CD8-positive, alpha-beta T cell (primary cell): ENCODE measurements at regions of chr5 and their contacts with region 1.

Region 1: DNA sequence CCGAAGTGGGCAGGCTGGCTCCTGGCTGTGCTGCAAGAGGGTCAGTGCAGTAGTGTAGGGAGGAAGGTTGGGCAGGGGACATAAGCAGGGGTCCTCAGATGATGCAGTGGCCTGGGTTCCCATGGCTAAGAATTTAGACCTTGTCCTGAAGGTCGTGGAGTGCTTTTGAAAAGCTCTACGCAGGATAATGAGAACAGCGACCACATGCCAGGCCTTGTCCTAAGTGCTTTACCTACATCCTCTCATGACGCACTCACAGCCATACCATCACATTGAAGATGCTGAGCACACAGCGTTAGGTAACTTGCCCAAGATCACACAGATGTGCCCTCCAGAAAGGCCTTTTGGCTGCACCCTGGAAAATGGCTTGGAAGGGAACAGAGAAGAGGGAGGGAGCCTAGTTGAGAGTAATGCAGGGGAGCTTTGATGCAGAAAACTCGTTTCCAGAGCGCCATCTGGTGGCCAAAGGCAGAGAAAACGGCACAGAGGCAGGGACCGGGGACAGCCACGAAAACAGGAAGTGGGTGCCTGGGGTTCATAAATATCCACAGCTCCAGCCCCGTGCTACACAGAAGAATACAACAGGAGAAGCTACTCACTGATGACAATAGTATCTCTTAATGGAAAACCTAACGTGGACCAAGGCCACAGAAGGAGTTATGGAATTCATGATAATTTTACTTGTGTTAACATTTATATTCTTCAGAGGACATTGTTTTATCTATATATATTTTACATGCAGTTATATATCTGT is 2.6 kb upstream of the PCDH12 start:
- DNase-seq: peak; percentile 81 to 97 (median 91)
- ATAC-seq: peak; percentile 99
- H3K4me3 ChIP-seq: no peak overlapping the region
- H3K4me3 Mint-ChIP-seq: peak overlapping the region; percentile 59
- H3K27ac ChIP-seq: peak overlapping the region in 1 of 2 experiments; percentile 66
- H3K27ac Mint-ChIP-seq: peak overlapping the region; percentile 95
- H3K4me1 ChIP-seq: peaks cover 42% of the 10 kb centered on the region
- H3K4me1 Mint-ChIP-seq: peaks cover 43% of the 10 kb centered on the region
- H3K27me3 ChIP-seq: no peaks in the 10 kb centered on the region
- H3K27me3 Mint-ChIP-seq: no peaks in the 10 kb centered on the region
- CTCF ChIP-seq: peak; percentile 83

Region 2: GRCh38 chr5:141664732-141665461 is 295.7 kb before region 1 on chr5:
- CTCF ChIA-PET with region 1: interaction called, 56 read pairs
- POLR2A ChIA-PET with region 1: interaction called, 7 read pairs
- intact Hi-C with region 1: loop called (anchors 1 kb)
- DNase-seq: peak; percentile 49 to 88 (median 76)
- ATAC-seq: peak; percentile 83
- H3K4me3 ChIP-seq: no peak overlapping the region
- H3K4me3 Mint-ChIP-seq: no peak overlapping the region
- H3K27ac ChIP-seq: no peak overlapping the region
- H3K27ac Mint-ChIP-seq: no peak overlapping the region
- H3K4me1 ChIP-seq: no peaks in the 10 kb centered on the region
- H3K4me1 Mint-ChIP-seq: peaks cover 3% of the 10 kb centered on the region
- H3K27me3 ChIP-seq: no peaks in the 10 kb centered on the region
- H3K27me3 Mint-ChIP-seq: no peaks in the 10 kb centered on the region
- CTCF ChIP-seq: peak; percentile 83

Region 3: GRCh38 chr5:141681695-141682641 is 278.7 kb before region 1 on chr5 and contains the start of gene ARAP3:
- CTCF ChIA-PET with region 1: interaction called, 22 read pairs
- POLR2A ChIA-PET with region 1: no interaction called
- intact Hi-C with region 1: no loop called
- DNase-seq: peak in 7 of 9 experiments; percentile 30 to 78 (median 49)
- ATAC-seq: peak; percentile 54
- H3K4me3 ChIP-seq: peak within 1 kb of the TSS; percentile 55 to 56
- H3K4me3 Mint-ChIP-seq: peak within 1 kb of the TSS; percentile 76
- H3K27ac ChIP-seq: peak within 1 kb of the TSS in 1 of 2 experiments; percentile 34
- H3K27ac Mint-ChIP-seq: peak within 1 kb of the TSS; percentile 49
- H3K4me1 ChIP-seq: peaks cover 30% of the 10 kb centered on the region
- H3K4me1 Mint-ChIP-seq: peaks cover 28% of the 10 kb centered on the region
- H3K27me3 ChIP-seq: no peaks in the 10 kb centered on the region
- H3K27me3 Mint-ChIP-seq: no peaks in the 10 kb centered on the region
- CTCF ChIP-seq: no peak
- total RNA-seq, gene ARAP3: 0.73 to 1.2 TPM

Region 4: DNA sequence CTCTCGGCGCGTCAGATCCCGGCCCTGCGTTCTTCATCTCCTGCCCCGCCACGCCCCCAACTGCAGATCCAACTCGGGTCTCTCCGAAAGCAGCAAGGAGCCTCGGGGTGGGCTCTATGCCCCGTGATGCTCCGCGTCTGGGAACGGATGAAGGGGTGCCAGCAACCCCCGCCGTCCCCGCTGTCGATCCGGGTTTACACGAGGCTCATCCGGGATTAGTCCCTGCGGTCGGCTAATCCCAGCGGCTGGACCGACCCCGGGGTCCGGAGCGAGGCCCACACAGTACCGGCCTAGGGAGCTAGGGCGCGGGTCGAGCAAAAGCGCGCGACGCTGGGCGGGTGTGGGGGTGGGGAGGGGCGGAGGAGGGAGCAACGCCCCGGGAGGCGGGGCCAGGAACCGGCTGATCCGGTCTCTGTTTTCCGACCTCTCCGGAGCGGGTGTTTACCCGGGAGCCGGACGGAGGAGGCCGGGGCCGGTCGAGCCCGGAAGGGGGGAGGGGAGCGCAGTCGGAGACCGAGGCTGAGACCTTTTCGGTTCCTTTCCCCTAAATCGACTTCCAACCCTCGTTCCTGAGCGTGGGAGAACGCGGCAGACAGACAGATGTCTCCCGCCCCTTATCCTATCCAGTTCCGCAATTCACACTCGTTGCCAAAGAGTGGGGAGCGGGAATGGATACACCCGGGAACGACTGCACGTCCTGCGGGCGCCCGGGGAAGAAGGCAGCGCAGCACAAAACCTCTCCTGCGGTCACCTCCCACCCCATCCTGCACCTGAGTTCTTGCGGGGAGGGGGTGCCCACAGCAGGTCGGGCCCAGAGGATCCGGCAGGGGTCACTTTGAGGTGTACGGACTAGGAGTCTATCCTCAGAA is 111.0 kb before region 1 on chr5:
- CTCF ChIA-PET with region 1: interaction called, 4 read pairs
- POLR2A ChIA-PET with region 1: interaction called, 3 read pairs
- intact Hi-C with region 1: loop called in 1 of 2 experiments (anchors 5 kb)
- DNase-seq: peak; percentile 42 to 83 (median 70)
- ATAC-seq: peak; percentile 79
- H3K4me3 ChIP-seq: peak overlapping the region; percentile 77 to 84
- H3K4me3 Mint-ChIP-seq: peak overlapping the region; percentile 87
- H3K27ac ChIP-seq: peak overlapping the region; percentile 73
- H3K27ac Mint-ChIP-seq: peak overlapping the region; percentile 82
- H3K4me1 ChIP-seq: peaks cover 7% of the 10 kb centered on the region
- H3K4me1 Mint-ChIP-seq: peaks cover 10% of the 10 kb centered on the region
- H3K27me3 ChIP-seq: no peaks in the 10 kb centered on the region
- H3K27me3 Mint-ChIP-seq: peaks cover 2% of the 10 kb centered on the region
- CTCF ChIP-seq: no peak

Region 5: GRCh38 chr5:141889282-141889871 is 71.2 kb before region 1 on chr5:
- CTCF ChIA-PET with region 1: interaction called, 39 read pairs
- POLR2A ChIA-PET with region 1: interaction called, 4 read pairs
- intact Hi-C with region 1: no loop called
- DNase-seq: no peak
- ATAC-seq: no peak
- H3K4me3 ChIP-seq: no peak overlapping the region
- H3K4me3 Mint-ChIP-seq: no peak overlapping the region
- H3K27ac ChIP-seq: no peak overlapping the region
- H3K27ac Mint-ChIP-seq: no peak overlapping the region
- H3K4me1 ChIP-seq: no peaks in the 10 kb centered on the region
- H3K4me1 Mint-ChIP-seq: no peaks in the 10 kb centered on the region
- H3K27me3 ChIP-seq: peaks cover 0 to 7% of the 10 kb centered on the region in 2 experiments
- H3K27me3 Mint-ChIP-seq: peaks cover 31% of the 10 kb centered on the region
- CTCF ChIP-seq: no peak

Region 6: DNA sequence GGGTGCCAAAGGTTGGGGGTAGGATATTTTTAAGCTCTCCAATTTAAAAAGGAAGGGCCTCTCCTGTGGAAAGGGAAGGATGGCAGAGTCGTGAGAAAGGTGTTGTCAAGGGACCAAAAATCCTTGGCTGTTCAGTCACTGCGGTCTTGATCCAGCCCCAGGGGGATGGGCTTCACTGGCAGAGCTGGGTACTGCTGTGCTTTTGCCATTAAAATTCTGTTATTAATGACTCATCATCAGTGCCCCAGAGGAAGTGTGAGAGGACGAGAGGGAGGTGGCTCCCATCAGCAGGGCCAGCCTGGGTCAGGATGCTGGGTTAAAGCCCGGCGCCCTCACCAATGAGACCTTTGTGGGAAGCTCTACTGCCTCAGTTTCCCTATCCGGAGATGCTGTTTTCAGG is 19.3 kb before region 1 on chr5:
- CTCF ChIA-PET with region 1: interaction called, 28 read pairs
- POLR2A ChIA-PET with region 1: interaction called, 4 read pairs
- intact Hi-C with region 1: no loop called
- DNase-seq: no peak
- ATAC-seq: no peak
- H3K4me3 ChIP-seq: no peak overlapping the region
- H3K4me3 Mint-ChIP-seq: no peak overlapping the region
- H3K27ac ChIP-seq: no peak overlapping the region
- H3K27ac Mint-ChIP-seq: peak overlapping the region; percentile 49
- H3K4me1 ChIP-seq: no peaks in the 10 kb centered on the region
- H3K4me1 Mint-ChIP-seq: no peaks in the 10 kb centered on the region
- H3K27me3 ChIP-seq: no peaks in the 10 kb centered on the region
- H3K27me3 Mint-ChIP-seq: no peaks in the 10 kb centered on the region
- CTCF ChIP-seq: no peak

Region 7: GRCh38 chr5:141992349-141992963 is 31.8 kb after region 1 on chr5:
- CTCF ChIA-PET with region 1: interaction called, 10 read pairs
- POLR2A ChIA-PET with region 1: no interaction called
- intact Hi-C with region 1: no loop called
- DNase-seq: peak; percentile 59 to 87 (median 81)
- ATAC-seq: peak; percentile 87
- H3K4me3 ChIP-seq: no peak overlapping the region
- H3K4me3 Mint-ChIP-seq: no peak overlapping the region
- H3K27ac ChIP-seq: no peak overlapping the region
- H3K27ac Mint-ChIP-seq: no peak overlapping the region
- H3K4me1 ChIP-seq: no peaks in the 10 kb centered on the region
- H3K4me1 Mint-ChIP-seq: peaks cover 5% of the 10 kb centered on the region
- H3K27me3 ChIP-seq: no peaks in the 10 kb centered on the region
- H3K27me3 Mint-ChIP-seq: no peaks in the 10 kb centered on the region
- CTCF ChIP-seq: peak; percentile 97